ENCODE measurements at regions of chr1 and their contacts with region 1.

Region 1: DNA sequence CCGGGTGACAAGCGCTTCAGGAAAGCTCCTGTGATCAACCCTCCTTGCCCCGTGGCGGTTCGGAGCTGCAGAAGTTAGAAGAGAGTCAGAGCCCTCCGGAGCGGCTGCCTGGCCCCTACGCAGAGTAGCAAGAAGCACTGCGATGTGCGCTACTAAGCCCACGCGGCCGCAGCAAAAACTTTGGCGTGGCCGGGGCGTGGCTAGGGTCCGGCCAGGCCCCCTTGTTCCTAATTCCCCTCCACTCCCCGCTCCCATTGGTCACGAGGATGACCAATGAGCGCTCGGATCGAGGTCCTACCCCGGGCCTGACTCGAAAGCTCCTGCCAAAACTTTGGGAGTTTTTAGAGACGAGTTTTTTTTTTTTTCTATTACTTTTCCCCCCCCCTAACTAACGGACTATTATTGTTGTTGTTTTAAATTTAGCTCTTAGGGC is at the start of gene HLX:
- DNase-seq: peak; percentile 87 to 88
- ATAC-seq: peak; percentile 92
- H3K4me3 ChIP-seq: peak within 1 kb of the TSS; percentile 70 to 96 (median 94)
- H3K27ac ChIP-seq: peak within 1 kb of the TSS; percentile 87 to 94 (median 90)
- H3K4me1 ChIP-seq: peaks cover 8 to 21% of the 10 kb centered on the region in 2 donors
- H3K27me3 ChIP-seq: no peaks in the 10 kb centered on the region
- CTCF ChIP-seq: peak in 1 of 5 experiments; percentile 16
- POLR2A ChIP-seq: peak; percentile 66 to 86
- total RNA-seq, gene HLX: 3.5 to 8.3 (median 6.4) TPM

Region 2: DNA sequence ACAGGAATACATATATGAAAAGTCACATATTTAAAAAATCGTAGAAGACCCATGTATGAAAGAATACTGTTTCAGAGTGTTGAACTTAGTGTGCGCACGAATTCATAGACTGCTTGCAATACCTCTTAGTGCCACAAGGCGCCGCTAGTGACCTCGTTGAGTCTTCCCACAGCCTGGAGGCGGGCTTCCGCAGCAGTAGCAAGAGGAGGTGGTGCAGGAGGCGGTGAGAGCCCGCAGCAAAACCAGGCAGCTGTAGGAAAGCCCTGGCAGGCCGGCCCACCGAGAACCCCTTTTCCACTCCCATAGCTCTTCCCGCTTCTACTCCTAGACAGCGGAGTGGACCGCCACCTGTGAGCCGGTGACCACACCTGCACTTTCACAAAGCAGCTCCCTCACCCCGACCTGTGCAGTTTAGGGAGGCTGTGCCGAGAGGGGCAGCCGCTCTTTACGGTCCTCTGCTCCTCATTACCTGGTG is 68.9 kb before region 1 on chr1:
- in situ Hi-C with region 1: loop called in 1 of 4 experiments (anchors 10 kb)
- intact Hi-C with region 1: loop called (anchors 5 kb)
- DNase-seq: peak; percentile 48 to 62
- ATAC-seq: peak; percentile 69 to 82
- H3K4me3 ChIP-seq: no peak overlapping the region
- H3K27ac ChIP-seq: no peak overlapping the region
- H3K4me1 ChIP-seq: no peaks in the 10 kb centered on the region
- H3K27me3 ChIP-seq: no peaks in the 10 kb centered on the region
- CTCF ChIP-seq: peak; percentile 72 to 86 (median 81)
- POLR2A ChIP-seq: no peak

Region 3: DNA sequence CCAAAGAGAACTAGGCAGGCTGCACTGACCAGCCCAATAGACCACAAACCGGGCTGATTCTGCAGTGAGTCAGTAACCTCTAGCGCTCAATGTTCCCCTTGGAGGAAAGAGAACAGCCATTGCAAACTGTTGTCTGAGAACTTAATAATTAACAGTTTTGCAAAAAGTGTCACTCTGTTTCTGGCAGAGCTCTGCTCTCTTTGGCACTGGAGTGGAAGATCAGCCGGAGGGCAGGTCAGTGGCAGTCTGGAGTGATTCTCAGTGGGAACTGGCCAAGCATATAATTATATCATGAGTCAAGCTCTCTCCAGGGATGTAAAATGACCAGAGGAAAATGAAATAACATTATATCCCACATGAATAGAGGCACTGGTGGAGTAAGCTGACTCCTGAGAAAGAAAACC is 238.5 kb after region 1 on chr1:
- in situ Hi-C with region 1: no loop called
- intact Hi-C with region 1: loop called (anchors 5 kb)
- DNase-seq: peak; percentile 46 to 49
- ATAC-seq: peak; percentile 97 to 98
- H3K4me3 ChIP-seq: no peak overlapping the region
- H3K27ac ChIP-seq: peak overlapping the region; percentile 74 to 86 (median 80)
- H3K4me1 ChIP-seq: peaks cover 25 to 35% of the 10 kb centered on the region in 2 donors
- H3K27me3 ChIP-seq: no peaks in the 10 kb centered on the region
- CTCF ChIP-seq: no peak
- POLR2A ChIP-seq: peak in 1 of 2 donors; percentile 23

Region 4: DNA sequence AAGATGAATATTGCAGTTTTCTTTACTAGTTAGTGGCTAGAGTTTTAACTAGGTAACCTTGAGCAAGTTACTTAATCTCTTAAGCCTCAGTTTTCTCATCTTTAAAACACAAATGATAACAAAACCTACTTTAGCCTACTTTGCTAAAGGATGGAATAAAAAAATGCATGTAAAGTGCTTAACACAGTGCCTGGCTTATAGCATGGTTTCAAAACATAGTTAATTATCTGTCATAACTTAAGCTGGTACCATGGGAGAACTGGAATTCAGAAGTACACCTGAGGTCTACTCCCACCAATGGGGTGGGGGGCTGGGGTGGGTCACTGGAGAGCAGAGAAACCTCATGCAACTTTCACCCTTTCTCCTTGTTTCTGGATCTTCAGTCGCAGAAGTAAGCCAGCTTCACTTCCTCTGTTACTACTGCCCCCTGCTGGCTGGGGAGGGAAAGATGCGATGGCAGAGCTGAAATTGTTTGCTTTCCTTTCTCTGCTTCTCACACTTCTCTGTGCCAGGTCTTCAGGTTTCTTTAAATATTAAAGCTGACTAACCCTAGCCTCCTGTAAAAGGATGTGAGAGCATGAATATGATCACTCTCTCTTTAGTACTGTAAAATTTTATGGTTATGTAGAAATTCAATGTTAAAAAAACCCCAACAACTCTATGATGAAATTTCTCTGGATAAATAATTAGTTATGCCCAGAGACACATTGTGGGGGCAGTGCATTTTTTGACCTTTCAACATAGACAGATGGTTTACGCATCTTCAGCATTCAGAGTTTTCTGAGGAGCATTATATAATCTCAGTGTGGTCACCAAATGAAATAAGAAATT is 324.3 kb after region 1 on chr1:
- in situ Hi-C with region 1: loop called (anchors 5 to 10 kb)
- intact Hi-C with region 1: loop called (anchors 1 kb)
- DNase-seq: peak; percentile 60 to 62
- ATAC-seq: peak; percentile 73 to 78
- H3K4me3 ChIP-seq: no peak overlapping the region
- H3K27ac ChIP-seq: peak overlapping the region; percentile 16 to 68 (median 40)
- H3K4me1 ChIP-seq: peaks cover 8 to 15% of the 10 kb centered on the region in 2 donors
- H3K27me3 ChIP-seq: no peaks in the 10 kb centered on the region
- CTCF ChIP-seq: peak; percentile 55 to 92 (median 78)
- POLR2A ChIP-seq: no peak

Region 5: DNA sequence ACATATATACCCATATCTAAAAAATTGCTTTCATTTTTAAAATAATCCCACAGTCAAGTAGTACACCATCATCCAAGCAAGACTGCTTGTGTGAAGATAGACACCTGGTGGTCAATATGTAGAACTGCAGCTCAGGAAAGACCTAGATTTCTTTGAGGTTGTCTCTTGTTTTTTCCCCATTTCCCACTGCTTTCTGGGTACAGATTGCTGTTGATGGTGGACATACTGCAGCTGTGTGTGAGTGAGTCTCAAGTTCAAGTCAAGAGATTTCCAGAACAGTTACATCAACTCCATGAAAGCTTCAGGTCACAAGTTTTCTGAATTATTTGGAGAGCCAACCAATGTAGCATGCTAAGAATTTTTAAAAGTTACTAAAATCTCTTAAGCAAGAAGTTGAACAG is 556.4 kb after region 1 on chr1:
- in situ Hi-C with region 1: loop called in 3 of 4 experiments (anchors 5 to 10 kb)
- intact Hi-C with region 1: loop called (anchors 1 kb)
- DNase-seq: no peak
- ATAC-seq: peak; percentile 50 to 67
- H3K4me3 ChIP-seq: no peak overlapping the region
- H3K27ac ChIP-seq: no peak overlapping the region
- H3K4me1 ChIP-seq: peaks cover 6 to 9% of the 10 kb centered on the region in 2 donors
- H3K27me3 ChIP-seq: no peaks in the 10 kb centered on the region
- CTCF ChIP-seq: peak; percentile 59 to 90 (median 81)
- POLR2A ChIP-seq: no peak

Region 6: GRCh38 chr1:222465211-222466041 is 1586.3 kb after region 1 on chr1:
- in situ Hi-C with region 1: loop called in 1 of 4 experiments (anchors 25 kb)
- intact Hi-C with region 1: loop called (anchors 10 kb)
- DNase-seq: peak; percentile 70 to 84
- ATAC-seq: peak; percentile 94 to 96
- H3K4me3 ChIP-seq: peak overlapping the region; percentile 48 to 60 (median 54)
- H3K27ac ChIP-seq: peak overlapping the region; percentile 69 to 86 (median 82)
- H3K4me1 ChIP-seq: peaks cover 0 to 4% of the 10 kb centered on the region in 2 donors
- H3K27me3 ChIP-seq: no peaks in the 10 kb centered on the region
- CTCF ChIP-seq: peak; percentile 89 to 100 (median 100)
- POLR2A ChIP-seq: peak in 1 of 2 donors; percentile 13